GM10248 (cell line): ENCODE measurements at regions of chr22 and their contacts with region 1.

Region 1: GRCh38 chr22:28051787-28052356 is 132.8 kb upstream of the PITPNB start:
- DNase-seq: no peak
- CTCF ChIP-seq: peak; percentile 66

Region 2: GRCh38 chr22:28019881-28020871 is 31.7 kb before region 1 on chr22:
- CTCF ChIA-PET with region 1: interaction called, 29 read pairs
- POLR2A ChIA-PET with region 1: no interaction called
- DNase-seq: peak; percentile 78
- CTCF ChIP-seq: peak; percentile 92

Region 3: GRCh38 chr22:28029201-28029948 is 22.5 kb before region 1 on chr22:
- CTCF ChIA-PET with region 1: interaction called, 27 read pairs
- POLR2A ChIA-PET with region 1: no interaction called
- DNase-seq: no peak
- CTCF ChIP-seq: no peak

Region 4: DNA sequence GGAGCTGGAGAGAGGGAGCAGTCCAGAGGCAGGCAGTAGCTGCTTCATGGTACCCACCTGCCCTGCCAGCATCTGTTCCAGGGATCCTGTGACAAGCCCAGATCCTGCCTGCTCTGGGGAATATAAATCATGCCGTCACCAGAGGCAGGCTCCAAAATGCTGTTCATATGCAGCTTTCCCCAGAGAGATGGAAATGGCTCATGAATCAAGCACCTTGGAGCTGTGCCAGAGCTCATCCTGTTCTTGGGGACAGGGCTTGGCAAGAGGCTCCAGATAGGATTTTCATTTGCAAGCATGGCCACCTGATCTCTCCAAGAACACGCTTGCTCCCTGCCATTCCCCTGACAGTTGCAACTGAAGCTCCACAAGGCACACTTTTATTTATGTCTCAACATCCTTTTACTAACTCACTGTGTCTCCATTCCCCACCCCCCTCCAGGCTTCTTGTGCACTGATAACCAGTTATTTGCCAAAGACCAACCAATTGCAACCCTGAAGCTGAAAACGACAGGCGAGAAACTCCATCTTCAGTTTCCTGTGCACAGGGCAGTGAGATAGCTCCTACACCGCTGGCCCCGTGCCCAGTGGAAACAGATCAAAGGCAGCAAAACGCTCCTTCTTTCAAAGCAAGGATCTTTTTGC is 17.0 kb before region 1 on chr22:
- CTCF ChIA-PET with region 1: interaction called, 27 read pairs
- POLR2A ChIA-PET with region 1: no interaction called
- DNase-seq: no peak
- CTCF ChIP-seq: no peak

Region 5: GRCh38 chr22:28442264-28442710 is 390.4 kb after region 1 on chr22:
- CTCF ChIA-PET with region 1: interaction called, 47 read pairs
- POLR2A ChIA-PET with region 1: no interaction called
- DNase-seq: peak; percentile 86
- CTCF ChIP-seq: peak; percentile 89

Region 6: GRCh38 chr22:28594797-28595462 is 543.1 kb after region 1 on chr22:
- CTCF ChIA-PET with region 1: interaction called, 56 read pairs
- POLR2A ChIA-PET with region 1: no interaction called
- DNase-seq: peak; percentile 41
- CTCF ChIP-seq: peak; percentile 58

Region 7: GRCh38 chr22:28600546-28601143 is 548.8 kb after region 1 on chr22:
- CTCF ChIA-PET with region 1: interaction called, 56 read pairs
- POLR2A ChIA-PET with region 1: no interaction called
- DNase-seq: peak; percentile 37
- CTCF ChIP-seq: peak; percentile 45